AG04449 (cell line): ENCODE measurements at regions of chr14 and their contacts with region 1.

Region 1: GRCh38 chr14:68816262-68816942 is 23.5 kb upstream of the ZFP36L1 start:
- DNase-seq: no peak
- H3K4me3 ChIP-seq: peak overlapping the region; percentile 49
- CTCF ChIP-seq: peak; percentile 96

Region 2: GRCh38 chr14:67837011-67837624 is 979.3 kb before region 1 on chr14:
- CTCF ChIA-PET with region 1: interaction called, 31 read pairs
- POLR2A ChIA-PET with region 1: no interaction called
- DNase-seq: peak; percentile 54
- H3K4me3 ChIP-seq: no peak overlapping the region
- CTCF ChIP-seq: peak; percentile 64

Region 3: GRCh38 chr14:67934008-67934481 is 882.4 kb before region 1 on chr14:
- CTCF ChIA-PET with region 1: interaction called, 149 read pairs
- POLR2A ChIA-PET with region 1: no interaction called
- DNase-seq: peak; percentile 29
- H3K4me3 ChIP-seq: no peak overlapping the region
- CTCF ChIP-seq: peak; percentile 49

Region 4: DNA sequence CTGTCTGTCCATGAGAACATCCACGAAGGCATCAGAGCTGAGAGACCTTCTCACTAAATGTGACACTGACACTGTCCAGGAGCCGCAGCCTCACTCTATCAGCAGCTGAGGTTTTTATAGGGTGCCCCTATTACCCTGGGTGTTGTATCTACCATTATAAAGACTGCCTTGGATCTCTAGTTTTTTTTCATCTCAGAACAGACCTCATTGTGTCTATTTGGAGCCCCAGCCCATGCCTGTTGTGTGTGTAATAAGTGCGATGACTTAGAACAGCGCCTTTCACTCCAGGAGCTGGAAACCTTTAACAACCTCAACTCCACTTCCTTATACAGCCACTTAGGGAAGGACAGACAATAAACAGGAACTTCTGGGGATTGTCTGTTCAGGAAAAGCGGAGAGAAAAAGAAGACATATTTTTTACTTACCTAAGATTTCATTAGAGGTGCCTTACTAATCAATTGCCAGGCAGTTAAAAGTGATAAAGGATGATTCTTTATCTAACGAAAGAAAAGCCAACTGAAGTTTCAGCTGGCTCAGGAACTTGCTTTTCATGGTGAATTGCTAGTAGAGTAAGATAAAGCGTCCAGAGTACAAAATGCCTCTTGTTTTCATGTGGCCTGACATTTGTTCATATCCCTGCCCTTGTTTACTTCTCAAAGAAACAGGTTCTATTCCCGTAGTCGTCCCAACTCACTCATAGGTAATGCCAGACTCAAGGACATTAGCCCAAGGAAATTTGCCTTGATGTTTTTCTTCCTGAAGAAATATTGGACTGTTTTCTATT is 576.2 kb before region 1 on chr14:
- CTCF ChIA-PET with region 1: interaction called, 184 read pairs
- POLR2A ChIA-PET with region 1: no interaction called
- DNase-seq: no peak
- H3K4me3 ChIP-seq: no peak overlapping the region
- CTCF ChIP-seq: no peak

Region 5: DNA sequence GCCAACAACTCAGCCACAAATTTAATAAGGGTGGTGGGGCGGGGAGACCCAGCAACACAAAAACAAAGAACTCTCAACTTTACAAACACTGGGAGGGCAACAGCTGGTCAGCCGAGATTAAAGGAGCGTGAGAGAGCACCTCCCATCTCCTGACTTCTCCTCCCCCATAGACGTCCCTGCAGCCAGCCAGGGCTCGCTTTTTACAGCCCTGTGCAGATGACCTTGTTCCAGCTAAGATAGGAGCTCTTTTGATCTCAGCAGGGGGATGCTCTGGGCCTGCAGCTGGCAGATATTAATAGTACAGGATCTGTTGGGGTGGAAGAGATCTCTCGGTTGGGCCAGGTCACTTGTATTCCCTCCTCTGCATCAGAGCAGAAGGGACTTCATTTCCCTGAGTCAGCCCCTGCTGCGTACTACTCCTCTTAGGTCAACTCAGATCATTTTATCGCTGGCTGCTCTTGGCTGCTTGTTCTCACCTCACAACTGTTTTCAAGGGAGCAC is 521.0 kb before region 1 on chr14:
- CTCF ChIA-PET with region 1: interaction called, 21 read pairs
- POLR2A ChIA-PET with region 1: no interaction called
- DNase-seq: no peak
- H3K4me3 ChIP-seq: no peak overlapping the region
- CTCF ChIP-seq: no peak